Gastrocnemius medialis (tissue), 4 donors: ENCODE measurements at regions of chr4 and their contacts with region 1.

Region 1: GRCh38 chr4:25258981-25259578 is 25.2 kb downstream of the PI4K2B start:
- DNase-seq: no peak
- ATAC-seq: no peak
- H3K4me3 ChIP-seq: no peak overlapping the region
- H3K27ac ChIP-seq: no peak overlapping the region
- H3K4me1 ChIP-seq: no peaks in the 10 kb centered on the region
- H3K27me3 ChIP-seq: no peaks in the 10 kb centered on the region
- CTCF ChIP-seq: no peak
- POLR2A ChIP-seq: no peak

Region 2: GRCh38 chr4:24704149-24704548 is 554.9 kb before region 1 on chr4:
- in situ Hi-C with region 1: no loop called
- intact Hi-C with region 1: no loop called
- DNase-seq: no peak
- ATAC-seq: no peak
- H3K4me3 ChIP-seq: no peak overlapping the region
- H3K27ac ChIP-seq: no peak overlapping the region
- H3K4me1 ChIP-seq: no peaks in the 10 kb centered on the region
- H3K27me3 ChIP-seq: no peaks in the 10 kb centered on the region
- CTCF ChIP-seq: no peak
- POLR2A ChIP-seq: no peak

Region 3: DNA sequence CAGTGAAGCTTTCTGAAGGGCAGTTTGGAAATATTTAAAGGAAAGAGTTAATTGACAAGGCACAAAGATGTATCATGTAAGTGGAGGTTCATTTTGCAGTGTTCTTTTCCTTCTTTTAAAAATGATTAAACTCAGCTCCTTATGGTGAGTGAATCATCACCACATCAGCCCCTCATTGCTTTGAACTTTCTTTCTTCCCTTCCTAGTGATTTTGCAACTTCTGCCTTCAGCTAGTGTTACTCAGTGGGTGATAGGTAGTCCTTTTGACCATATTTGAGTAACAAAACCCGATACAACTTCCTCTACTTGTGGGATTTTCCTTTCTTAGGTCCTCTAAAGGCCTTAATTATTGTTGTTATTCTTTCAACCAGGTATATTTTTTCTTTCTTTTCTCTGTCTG is 61.7 kb after region 1 on chr4:
- in situ Hi-C with region 1: loop called in 1 of 4 experiments (anchors 10 kb)
- intact Hi-C with region 1: no loop called
- DNase-seq: no peak
- ATAC-seq: no peak
- H3K4me3 ChIP-seq: no peak overlapping the region
- H3K27ac ChIP-seq: no peak overlapping the region
- H3K4me1 ChIP-seq: no peaks in the 10 kb centered on the region
- H3K27me3 ChIP-seq: no peaks in the 10 kb centered on the region
- CTCF ChIP-seq: no peak
- POLR2A ChIP-seq: no peak